Prostate gland (tissue), 2 donors: ENCODE measurements at regions of chr9 and their contacts with region 1.

Region 1: GRCh38 chr9:36190388-36191287 is at the start of gene CLTA:
- DNase-seq: peak; percentile 98
- H3K4me3 ChIP-seq: peak within 1 kb of the TSS; percentile 95 to 96
- H3K27ac ChIP-seq: peak within 1 kb of the TSS; percentile 81 to 90
- H3K4me1 ChIP-seq: peaks cover 5% of the 10 kb centered on the region
- H3K27me3 ChIP-seq: no peaks in the 10 kb centered on the region
- CTCF ChIP-seq: peak; percentile 21 to 76 (median 56)
- POLR2A ChIP-seq: peak; percentile 87
- total RNA-seq, gene CLTA: 210 to 259 TPM

Region 2: GRCh38 chr9:36142510-36143244 is 48.0 kb before region 1 on chr9:
- intact Hi-C with region 1: loop called (anchors 2 kb)
- DNase-seq: no peak
- H3K4me3 ChIP-seq: no peak overlapping the region
- H3K27ac ChIP-seq: peak overlapping the region; percentile 74 to 80
- H3K4me1 ChIP-seq: peaks cover 5% of the 10 kb centered on the region
- H3K27me3 ChIP-seq: no peaks in the 10 kb centered on the region
- CTCF ChIP-seq: no peak
- POLR2A ChIP-seq: no peak

Region 3: GRCh38 chr9:36258208-36258988 is 67.8 kb after region 1 on chr9 and contains the start of gene GNE:
- intact Hi-C with region 1: loop called (anchors 10 kb)
- DNase-seq: peak; percentile 97
- H3K4me3 ChIP-seq: peak within 1 kb of the TSS; percentile 63 to 92
- H3K27ac ChIP-seq: peak within 1 kb of the TSS; percentile 97 to 98
- H3K4me1 ChIP-seq: no peaks in the 10 kb centered on the region
- H3K27me3 ChIP-seq: no peaks in the 10 kb centered on the region
- CTCF ChIP-seq: peak in 2 of 4 experiments; percentile 2 to 14
- POLR2A ChIP-seq: peak; percentile 90
- total RNA-seq, gene GNE: 34.5 to 54.0 TPM

Region 4: DNA sequence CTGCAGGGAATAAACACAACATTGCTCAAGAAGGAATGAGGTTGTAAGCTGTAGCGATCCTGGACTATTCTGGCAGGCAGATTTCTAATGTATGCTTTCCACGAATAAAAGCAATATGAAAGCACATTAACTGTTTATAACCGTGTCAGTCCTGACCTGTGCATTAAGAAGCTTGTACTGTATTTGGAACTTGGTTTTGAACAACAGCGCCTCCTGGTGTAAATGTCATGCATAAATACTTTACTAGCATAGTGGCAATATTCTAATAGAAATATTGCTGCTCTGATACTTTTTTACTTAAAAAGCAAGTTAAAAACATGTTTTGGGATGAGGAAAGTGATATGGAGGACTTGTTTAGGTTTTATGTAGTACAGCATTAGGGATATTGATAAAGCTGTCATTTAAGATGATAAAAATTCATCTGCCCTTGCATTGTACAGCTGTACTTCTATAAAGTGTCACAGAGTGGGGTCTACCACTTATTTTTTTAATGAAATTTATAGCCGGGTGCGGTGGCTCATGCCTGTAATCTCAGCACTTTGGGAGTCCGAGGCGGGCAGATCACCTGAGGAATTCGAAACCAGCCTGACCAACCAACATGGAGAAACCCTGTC is 138.3 kb after region 1 on chr9:
- intact Hi-C with region 1: loop called (anchors 2 kb)
- DNase-seq: peak; percentile 78
- H3K4me3 ChIP-seq: no peak overlapping the region
- H3K27ac ChIP-seq: no peak overlapping the region
- H3K4me1 ChIP-seq: no peaks in the 10 kb centered on the region
- H3K27me3 ChIP-seq: no peaks in the 10 kb centered on the region
- CTCF ChIP-seq: peak; percentile 78 to 95 (median 92)
- POLR2A ChIP-seq: no peak